ENCODE measurements at regions of chr17 and their contacts with region 1.

Region 1: GRCh38 chr17:28552246-28552999 is at the start of gene UNC119:
- DNase-seq: peak; percentile 70
- H3K4me3 Mint-ChIP-seq: peak within 1 kb of the TSS; percentile 94
- H3K27ac Mint-ChIP-seq: peak within 1 kb of the TSS; percentile 91
- H3K4me1 Mint-ChIP-seq: peaks cover 66% of the 10 kb centered on the region
- H3K27me3 Mint-ChIP-seq: no peaks in the 10 kb centered on the region
- total RNA-seq, gene UNC119: 63.3 and 63.9 TPM in 2 replicates

Region 2: GRCh38 chr17:28371245-28372202 is 180.9 kb before region 1 on chr17 and contains the start of gene SARM1:
- intact Hi-C with region 1: loop called (anchors 5 kb)
- DNase-seq: peak; percentile 85
- H3K4me3 Mint-ChIP-seq: peak within 1 kb of the TSS; percentile 95
- H3K27ac Mint-ChIP-seq: peak within 1 kb of the TSS; percentile 98
- H3K4me1 Mint-ChIP-seq: peaks cover 14% of the 10 kb centered on the region
- H3K27me3 Mint-ChIP-seq: no peaks in the 10 kb centered on the region
- total RNA-seq, gene SARM1: 40.7 and 45.6 TPM in 2 replicates

Region 3: GRCh38 chr17:28494445-28495188 is 57.8 kb before region 1 on chr17:
- intact Hi-C with region 1: loop called (anchors 1 kb)
- DNase-seq: peak; percentile 68
- H3K4me3 Mint-ChIP-seq: no peak overlapping the region
- H3K27ac Mint-ChIP-seq: no peak overlapping the region
- H3K4me1 Mint-ChIP-seq: peaks cover 4% of the 10 kb centered on the region
- H3K27me3 Mint-ChIP-seq: no peaks in the 10 kb centered on the region

Region 4: DNA sequence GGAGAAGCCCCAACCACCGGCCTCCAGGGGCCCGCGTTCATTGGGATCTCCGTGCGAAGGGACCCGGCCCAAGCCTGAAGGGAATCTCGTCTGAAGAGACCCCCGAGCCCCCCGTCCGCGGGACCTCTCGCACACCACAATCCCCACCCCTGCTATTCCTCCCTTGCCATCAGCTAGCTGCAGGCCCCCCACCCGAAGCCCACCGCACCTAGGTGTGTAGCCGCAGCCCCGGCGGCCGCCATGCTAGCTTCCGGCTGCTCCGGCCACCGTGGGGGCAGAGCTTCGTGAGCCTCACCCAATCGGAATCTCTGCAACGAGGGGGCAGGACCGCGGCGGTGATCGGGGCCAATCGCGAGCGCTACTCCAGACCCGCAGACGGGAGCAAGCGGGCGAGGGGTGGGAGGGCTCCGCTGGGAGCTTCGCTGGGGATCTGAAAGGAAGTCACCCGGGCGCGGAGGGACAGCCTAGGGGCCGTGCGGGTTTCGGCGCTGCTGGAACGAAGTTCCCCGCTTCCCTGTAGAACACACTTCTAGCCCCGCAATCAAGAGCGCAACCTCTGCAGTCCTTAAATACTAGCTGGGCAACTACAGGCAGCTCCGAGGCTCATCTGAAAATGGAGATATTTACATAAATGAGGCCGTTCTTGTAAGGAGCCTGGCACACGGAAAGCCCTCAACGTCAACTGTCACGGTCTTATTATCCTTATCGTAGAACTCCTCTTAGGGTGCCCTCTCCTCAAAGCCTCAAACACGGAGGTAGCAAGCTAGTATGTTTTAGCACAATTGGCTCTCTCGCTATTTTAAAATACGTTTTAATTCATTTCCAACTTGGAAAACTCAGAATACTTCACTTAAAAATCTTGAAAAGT is 19.1 kb after region 1 on chr17 and contains the start of gene PIGS:
- intact Hi-C with region 1: loop called (anchors 1 kb)
- DNase-seq: peak; percentile 91
- H3K4me3 Mint-ChIP-seq: peak within 1 kb of the TSS; percentile 94
- H3K27ac Mint-ChIP-seq: peak within 1 kb of the TSS; percentile 88
- H3K4me1 Mint-ChIP-seq: peaks cover 81% of the 10 kb centered on the region
- H3K27me3 Mint-ChIP-seq: no peaks in the 10 kb centered on the region
- total RNA-seq, gene PIGS: 57.8 and 61.2 TPM in 2 replicates

Region 5: GRCh38 chr17:28576758-28577465 is 24.5 kb after region 1 on chr17 and contains the start of gene ALDOC:
- intact Hi-C with region 1: loop called (anchors 1 kb)
- DNase-seq: peak; percentile 98
- H3K4me3 Mint-ChIP-seq: peak within 1 kb of the TSS; percentile 86
- H3K27ac Mint-ChIP-seq: peak within 1 kb of the TSS; percentile 94
- H3K4me1 Mint-ChIP-seq: peaks cover 79% of the 10 kb centered on the region
- H3K27me3 Mint-ChIP-seq: no peaks in the 10 kb centered on the region
- total RNA-seq, gene ALDOC: 44.0 and 47.6 TPM in 2 replicates

Region 6: GRCh38 chr17:28612936-28613872 is 60.8 kb after region 1 on chr17:
- intact Hi-C with region 1: loop called (anchors 5 kb)
- DNase-seq: peak; percentile 4
- H3K4me3 Mint-ChIP-seq: no peak overlapping the region
- H3K27ac Mint-ChIP-seq: no peak overlapping the region
- H3K4me1 Mint-ChIP-seq: no peaks in the 10 kb centered on the region
- H3K27me3 Mint-ChIP-seq: no peaks in the 10 kb centered on the region

Region 7: DNA sequence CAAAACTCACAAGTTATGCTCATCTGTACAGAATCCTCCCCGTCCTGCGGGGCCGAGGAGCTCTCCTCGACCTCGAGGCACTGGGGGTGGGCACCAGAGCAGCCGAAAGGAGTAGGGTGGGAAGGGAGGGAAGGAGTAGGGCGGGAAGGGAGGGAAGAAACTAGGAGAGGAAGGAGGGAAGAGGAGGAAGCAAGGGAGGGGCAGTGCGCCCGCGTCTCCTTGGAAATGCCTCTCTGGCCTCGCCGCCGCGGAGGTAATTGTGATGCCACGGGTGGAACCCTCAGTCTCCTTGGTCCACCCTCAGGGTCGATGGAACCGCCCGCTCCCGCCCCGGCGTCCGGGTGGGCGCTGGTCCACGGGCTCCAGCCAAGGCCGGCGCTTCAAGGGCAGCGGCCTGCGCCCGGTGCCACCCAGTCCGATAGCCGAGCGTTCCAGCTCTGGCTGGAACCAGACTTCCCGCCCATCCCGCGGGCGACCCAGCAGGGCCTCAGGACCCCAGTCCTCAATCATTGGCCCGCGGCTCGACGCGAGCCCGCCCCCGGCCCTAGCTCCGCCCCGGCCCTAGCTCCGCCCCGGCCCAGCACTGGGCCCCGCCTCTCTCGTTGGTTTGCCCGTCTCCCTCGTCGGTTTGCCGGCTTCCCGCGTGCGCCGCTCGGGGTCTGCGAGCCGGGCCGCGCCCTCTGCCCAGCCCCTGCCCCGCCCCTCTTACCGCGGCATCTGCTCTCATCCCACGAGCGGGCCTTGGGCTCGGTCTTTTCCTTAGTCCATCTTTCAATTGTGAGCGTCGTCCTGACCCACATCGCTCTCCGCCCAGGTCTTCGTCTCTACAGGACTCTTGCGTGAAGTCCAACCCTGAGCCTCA is 158.7 kb after region 1 on chr17:
- intact Hi-C with region 1: no loop called
- DNase-seq: peak; percentile 92
- H3K4me3 Mint-ChIP-seq: peak overlapping the region; percentile 89
- H3K27ac Mint-ChIP-seq: peak overlapping the region; percentile 92
- H3K4me1 Mint-ChIP-seq: peaks cover 20% of the 10 kb centered on the region
- H3K27me3 Mint-ChIP-seq: peaks cover 16% of the 10 kb centered on the region

Measured in activated T-helper 1 cell treated with anti-CD3 and anti-CD28 coated beads, Interleukin-12 subunit alpha, Interleukin-12 subunit beta, Interleukin-2, Interleukin-4 antibody, amounts not matched to agents 30 ng/mL and 10 ng/mL and 1 ng/mL, durations not matched to agents 14 hours and 24 hours and 36 hours (primary cell).